Body of pancreas (tissue), 4 donors: ENCODE measurements at regions of chr16 and their contacts with region 1.

Region 1: DNA sequence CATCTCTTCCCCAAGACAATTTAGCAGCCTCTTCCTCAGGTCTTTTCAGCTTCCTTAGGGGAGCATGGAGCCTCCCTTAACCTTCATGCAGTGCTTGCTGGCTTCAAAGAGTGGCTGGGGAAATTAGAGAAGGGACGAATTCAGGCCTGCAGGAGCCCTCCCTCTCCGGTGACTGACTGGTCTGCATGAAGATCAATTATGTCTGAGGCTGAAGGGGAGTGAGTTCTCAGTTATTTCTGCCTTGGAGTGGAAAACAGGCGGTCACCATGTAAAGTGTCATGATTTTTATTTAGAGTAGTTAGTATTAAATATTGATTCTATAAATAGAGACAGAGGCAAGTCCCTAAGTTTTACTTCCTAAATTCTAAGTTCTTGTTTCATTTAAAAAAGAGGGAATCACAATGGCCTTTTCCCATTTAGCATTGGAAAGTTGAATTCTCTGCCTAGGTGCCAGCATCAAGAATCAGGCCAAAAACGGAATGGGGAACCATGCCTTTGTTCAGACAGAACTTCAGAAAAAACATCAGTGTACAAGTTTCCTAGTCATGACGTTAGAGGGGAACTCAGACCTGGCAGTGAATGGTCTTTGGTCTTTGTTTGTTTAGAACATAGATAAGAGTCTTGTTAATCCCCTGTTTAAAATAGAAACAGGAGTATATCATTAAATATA is 4.4 kb downstream of the GABARAPL2 start:
- DNase-seq: no peak
- ATAC-seq: no peak
- H3K4me3 ChIP-seq: no peak overlapping the region
- H3K27ac ChIP-seq: peak overlapping the region in 1 of 4 donors; percentile 28
- H3K4me1 ChIP-seq: peaks cover 26% of the 10 kb centered on the region
- H3K27me3 ChIP-seq: no peaks in the 10 kb centered on the region
- CTCF ChIP-seq: no peak
- POLR2A ChIP-seq: no peak

Region 2: DNA sequence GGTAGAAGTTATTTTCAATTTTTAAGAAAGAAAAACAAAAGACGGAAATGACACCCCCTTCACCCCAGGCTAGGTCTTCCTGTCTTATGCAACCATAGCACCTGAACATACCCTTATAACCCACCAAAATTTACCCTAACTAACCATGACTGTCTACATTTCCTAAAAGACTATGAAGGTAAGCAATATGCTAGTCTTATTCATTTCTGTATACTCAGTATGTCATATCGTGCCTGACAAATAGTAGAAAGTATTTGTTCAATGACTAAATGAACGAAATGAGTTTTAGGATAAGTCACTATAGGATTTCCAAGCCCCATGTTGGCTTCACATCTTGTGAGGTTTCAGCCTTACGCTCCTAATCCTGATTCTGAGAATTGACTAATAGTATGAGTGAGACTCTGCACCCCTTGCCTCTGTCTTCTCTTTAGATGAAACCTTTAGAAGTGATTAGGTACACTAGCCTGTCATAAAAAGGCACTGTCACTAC is 46.0 kb after region 1 on chr16:
- intact Hi-C with region 1: loop called (anchors 5 kb)
- DNase-seq: no peak
- ATAC-seq: no peak
- H3K4me3 ChIP-seq: no peak overlapping the region
- H3K27ac ChIP-seq: no peak overlapping the region
- H3K4me1 ChIP-seq: peaks cover 2% of the 10 kb centered on the region
- H3K27me3 ChIP-seq: no peaks in the 10 kb centered on the region
- CTCF ChIP-seq: no peak
- POLR2A ChIP-seq: no peak